GM12878 (cell line): ENCODE measurements at regions of chr10 and their contacts with region 1.

Region 1: DNA sequence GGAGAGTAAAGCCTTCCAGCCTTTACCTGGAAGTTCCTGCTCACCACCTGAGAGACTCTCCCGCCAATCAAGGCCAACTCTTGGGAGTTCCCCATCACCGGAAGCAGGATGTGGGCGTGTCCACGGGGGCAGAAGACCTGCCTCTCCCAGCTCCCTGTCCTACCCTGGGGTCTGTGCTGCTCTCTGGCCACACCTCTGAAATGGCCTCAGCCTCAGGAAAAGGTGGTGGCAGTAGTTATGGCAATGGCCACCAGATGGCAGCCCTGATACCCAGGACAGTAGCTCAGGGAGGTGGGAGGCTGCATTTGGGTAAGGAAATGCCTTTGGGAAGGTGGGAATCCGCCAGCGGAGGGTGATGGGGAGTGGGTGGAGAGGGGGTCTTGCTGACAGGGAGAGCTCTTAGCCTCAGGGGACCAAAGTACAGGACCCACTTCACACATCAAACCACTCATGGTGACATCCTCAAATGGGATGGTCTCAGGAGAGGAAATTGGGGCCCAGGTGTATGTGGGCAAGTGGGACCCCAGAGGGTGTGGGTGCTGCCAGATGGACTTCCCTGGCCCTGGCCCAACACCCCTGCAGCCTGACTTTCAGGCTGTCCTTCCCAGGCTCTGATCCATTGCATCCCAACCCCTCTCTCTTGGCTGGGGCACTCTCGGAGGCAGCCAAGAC is 33.9 kb downstream of the KAZALD1 start:
- DNase-seq: peak; percentile 52
- ATAC-seq: peak; percentile 99
- H3K4me3 ChIP-seq: no peak overlapping the region
- H3K27ac ChIP-seq: no peak overlapping the region
- H3K4me1 ChIP-seq: no peaks in the 10 kb centered on the region
- H3K27me3 ChIP-seq: peaks cover 0 to 1% of the 10 kb centered on the region in 2 experiments; a peak in 3 of 4 replicates
- CTCF ChIP-seq: peak; percentile 80 to 91 (median 91)
- EP300 ChIP-seq: no peak
- POLR2A ChIP-seq: no peak
- RAD21 ChIP-seq: peak; percentile 59

Region 2: DNA sequence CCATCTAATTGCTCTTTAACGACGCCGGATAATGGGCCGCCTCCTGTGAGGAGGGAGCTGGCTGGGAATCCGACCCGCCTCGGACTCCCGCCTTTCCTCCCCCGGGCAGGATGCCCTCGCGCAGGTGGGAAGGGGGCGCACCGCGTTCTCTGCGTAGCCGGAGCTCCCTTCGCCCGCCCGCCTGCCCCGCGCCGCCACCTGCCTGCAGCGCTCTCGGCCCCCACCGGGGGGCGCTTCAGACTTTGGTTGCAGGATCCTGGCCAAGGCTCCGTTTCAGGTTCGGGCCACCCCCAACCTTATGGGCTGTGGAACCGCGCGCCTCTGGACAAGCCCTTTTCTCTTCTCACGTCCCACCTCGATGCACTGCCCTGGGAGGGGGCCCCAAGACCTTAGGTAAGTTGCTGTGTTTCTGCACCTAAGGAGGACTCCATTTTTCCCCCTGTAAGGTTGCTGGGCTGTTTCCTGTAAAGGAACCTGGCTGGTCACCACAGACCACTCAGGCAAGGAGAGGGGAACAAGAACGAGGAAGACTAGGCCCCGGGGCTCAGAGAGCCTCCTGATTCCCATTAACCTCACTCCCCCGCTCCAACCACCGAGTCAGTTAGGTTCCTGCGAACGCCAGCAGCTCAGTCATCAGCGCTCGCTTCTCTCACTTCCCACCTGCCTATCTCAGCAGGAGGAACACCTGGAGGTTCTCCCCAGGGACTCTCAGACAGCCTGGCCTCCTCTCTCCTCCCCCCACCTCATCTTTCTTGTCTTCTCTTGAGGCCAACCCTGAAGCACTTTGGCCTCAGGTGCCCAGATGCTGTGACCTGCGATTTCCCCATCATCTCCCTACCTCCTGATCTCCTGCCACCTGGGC is 45.2 kb before region 1 on chr10:
- CTCF ChIA-PET with region 1: interaction called, 23 read pairs
- POLR2A ChIA-PET with region 1: no interaction called
- RAD21 ChIA-PET with region 1: no interaction called
- SMC1A ChIA-PET with region 1: interaction called, 5 read pairs
- in situ Hi-C with region 1: no loop called
- intact Hi-C with region 1: no loop called
- DNase-seq: no peak
- ATAC-seq: peak; percentile 97
- H3K4me3 ChIP-seq: peak overlapping the region; percentile 56; the same call in 1 of the 2 replicates
- H3K27ac ChIP-seq: no peak overlapping the region
- H3K4me1 ChIP-seq: peaks cover 8% of the 10 kb centered on the region
- H3K27me3 ChIP-seq: peaks cover 0 to 1% of the 10 kb centered on the region in 2 experiments; a peak in 2 of 4 replicates
- CTCF ChIP-seq: peak; percentile 85 to 88 (median 87)
- EP300 ChIP-seq: no peak
- POLR2A ChIP-seq: no peak
- RAD21 ChIP-seq: peak; percentile 65

Region 3: DNA sequence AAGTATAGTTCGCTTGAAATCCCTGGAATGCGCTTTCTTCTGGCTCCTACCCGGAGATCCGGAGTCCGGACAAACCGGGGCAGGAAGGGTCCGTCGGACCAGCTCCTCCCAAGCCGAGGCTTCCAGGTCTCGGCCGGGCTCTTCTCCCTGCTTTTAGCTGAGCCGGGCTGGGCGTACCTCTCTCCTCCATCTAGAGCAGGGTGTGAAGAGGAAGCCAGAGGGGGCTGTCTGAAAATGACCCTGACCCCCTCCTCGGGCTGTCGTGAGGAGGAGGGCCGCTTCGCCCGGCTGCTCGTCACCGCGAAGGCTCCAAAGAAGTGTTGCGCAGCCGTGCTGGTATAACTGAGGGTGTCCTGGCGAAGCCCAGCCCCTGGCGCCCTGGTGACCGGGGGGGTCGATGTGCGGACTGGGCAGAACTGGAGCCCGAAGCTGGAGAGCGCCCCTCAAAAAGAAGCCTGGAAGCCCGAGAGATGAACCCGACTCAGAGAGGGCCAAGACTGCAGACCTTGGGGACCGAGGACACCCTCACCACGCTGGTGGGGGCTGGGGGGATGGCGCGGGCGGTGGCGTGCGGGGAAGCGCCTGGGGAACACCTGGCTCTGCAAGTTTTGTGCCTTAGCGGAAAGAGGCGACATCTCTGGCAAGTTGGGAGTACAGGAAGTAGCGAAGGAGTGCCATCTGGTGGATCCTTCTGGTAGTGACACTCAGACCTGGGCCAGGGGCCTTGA is 28.2 kb before region 1 on chr10:
- CTCF ChIA-PET with region 1: interaction called, 18 read pairs
- POLR2A ChIA-PET with region 1: no interaction called
- RAD21 ChIA-PET with region 1: interaction called, 5 read pairs
- SMC1A ChIA-PET with region 1: interaction called, 4 read pairs
- in situ Hi-C with region 1: no loop called
- intact Hi-C with region 1: no loop called
- DNase-seq: peak; percentile 44
- ATAC-seq: peak; percentile 74
- H3K4me3 ChIP-seq: peak overlapping the region; percentile 87
- H3K27ac ChIP-seq: no peak overlapping the region
- H3K4me1 ChIP-seq: peaks cover 41% of the 10 kb centered on the region
- H3K27me3 ChIP-seq: peaks cover 2 to 3% of the 10 kb centered on the region in 2 experiments; a peak in 1 of 4 replicates
- CTCF ChIP-seq: peak; percentile 81 to 89 (median 82)
- EP300 ChIP-seq: no peak
- POLR2A ChIP-seq: no peak
- RAD21 ChIP-seq: peak; percentile 73

Region 4: GRCh38 chr10:101110856-101111546 is 15.3 kb after region 1 on chr10:
- CTCF ChIA-PET with region 1: interaction called, 17 read pairs
- POLR2A ChIA-PET with region 1: interaction called, 4 read pairs
- RAD21 ChIA-PET with region 1: no interaction called
- SMC1A ChIA-PET with region 1: interaction called, 3 read pairs
- in situ Hi-C with region 1: no loop called
- intact Hi-C with region 1: no loop called
- DNase-seq: no peak
- ATAC-seq: no peak
- H3K4me3 ChIP-seq: no peak overlapping the region
- H3K27ac ChIP-seq: no peak overlapping the region
- H3K4me1 ChIP-seq: no peaks in the 10 kb centered on the region
- H3K27me3 ChIP-seq: peaks cover 0 to 2% of the 10 kb centered on the region in 2 experiments; a peak in 2 of 4 replicates
- CTCF ChIP-seq: no peak
- EP300 ChIP-seq: no peak
- POLR2A ChIP-seq: no peak
- RAD21 ChIP-seq: no peak